K562 (cell line): ENCODE measurements at regions of chr7 and their contacts with region 1.

Region 1: GRCh38 chr7:101856473-101857357 is 39.3 kb downstream of the CUX1 start:
- DNase-seq: peak; percentile 97 to 98 (median 97)
- ATAC-seq: peak; percentile 94
- H3K4me3 ChIP-seq: peak overlapping the region; percentile 34
- H3K27ac ChIP-seq: peak overlapping the region; percentile 98
- H3K4me1 ChIP-seq: peaks cover 47 to 57% of the 10 kb centered on the region in 2 experiments
- H3K27me3 ChIP-seq: no peaks in the 10 kb centered on the region; a peak in 1 of 5 replicates
- CTCF ChIP-seq: peak; percentile 79 to 84 (median 82)
- EP300 ChIP-seq: peak; percentile 68
- POLR2A ChIP-seq: peak; percentile 69
- RAD21 ChIP-seq: peak; percentile 77 to 84

Region 2: DNA sequence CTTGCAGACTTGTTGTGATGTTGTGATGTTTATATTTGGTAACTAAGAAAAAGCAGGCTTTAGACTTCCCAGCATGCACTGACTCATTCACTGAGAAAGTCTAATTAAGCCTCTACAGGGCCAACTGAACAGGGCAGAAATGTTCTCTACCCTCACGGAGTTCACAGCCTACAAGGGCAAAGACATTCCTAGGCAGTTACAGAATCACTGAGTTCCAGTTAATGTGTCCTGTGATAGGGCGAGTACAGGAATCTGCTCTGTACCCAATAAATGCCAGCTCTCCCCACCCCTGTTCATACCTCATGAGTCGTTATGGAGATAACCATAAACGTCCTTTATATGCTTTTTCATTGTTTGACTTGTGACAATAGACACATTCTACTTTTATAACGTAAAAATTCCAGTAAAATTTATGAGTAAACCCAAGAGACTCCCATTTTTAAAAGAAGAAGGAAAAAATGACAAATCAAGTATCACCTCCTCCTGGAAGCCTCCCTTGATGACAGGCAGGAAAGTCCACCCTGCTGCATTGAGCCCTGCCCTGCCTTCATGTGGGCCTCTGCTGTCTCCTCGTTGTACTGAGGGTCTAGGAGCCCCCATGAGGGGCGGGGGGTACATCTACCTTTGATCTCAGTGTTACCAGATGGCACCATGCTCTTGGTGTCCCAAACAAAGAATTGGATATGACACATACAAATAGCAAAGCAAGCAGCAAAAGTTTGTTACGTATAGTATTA is 873.1 kb before region 1 on chr7:
- CTCF ChIA-PET with region 1: no interaction called
- POLR2A ChIA-PET with region 1: no interaction called
- in situ Hi-C with region 1: no loop called
- intact Hi-C with region 1: no loop called
- DNase-seq: no peak
- ATAC-seq: no peak
- H3K4me3 ChIP-seq: no peak overlapping the region
- H3K27ac ChIP-seq: no peak overlapping the region
- H3K4me1 ChIP-seq: peaks cover 0 to 2% of the 10 kb centered on the region in 2 experiments; a peak in 1 of 5 replicates
- H3K27me3 ChIP-seq: peaks cover 13 to 38% of the 10 kb centered on the region in 2 experiments
- CTCF ChIP-seq: no peak
- EP300 ChIP-seq: no peak
- POLR2A ChIP-seq: no peak
- RAD21 ChIP-seq: no peak

Region 3: DNA sequence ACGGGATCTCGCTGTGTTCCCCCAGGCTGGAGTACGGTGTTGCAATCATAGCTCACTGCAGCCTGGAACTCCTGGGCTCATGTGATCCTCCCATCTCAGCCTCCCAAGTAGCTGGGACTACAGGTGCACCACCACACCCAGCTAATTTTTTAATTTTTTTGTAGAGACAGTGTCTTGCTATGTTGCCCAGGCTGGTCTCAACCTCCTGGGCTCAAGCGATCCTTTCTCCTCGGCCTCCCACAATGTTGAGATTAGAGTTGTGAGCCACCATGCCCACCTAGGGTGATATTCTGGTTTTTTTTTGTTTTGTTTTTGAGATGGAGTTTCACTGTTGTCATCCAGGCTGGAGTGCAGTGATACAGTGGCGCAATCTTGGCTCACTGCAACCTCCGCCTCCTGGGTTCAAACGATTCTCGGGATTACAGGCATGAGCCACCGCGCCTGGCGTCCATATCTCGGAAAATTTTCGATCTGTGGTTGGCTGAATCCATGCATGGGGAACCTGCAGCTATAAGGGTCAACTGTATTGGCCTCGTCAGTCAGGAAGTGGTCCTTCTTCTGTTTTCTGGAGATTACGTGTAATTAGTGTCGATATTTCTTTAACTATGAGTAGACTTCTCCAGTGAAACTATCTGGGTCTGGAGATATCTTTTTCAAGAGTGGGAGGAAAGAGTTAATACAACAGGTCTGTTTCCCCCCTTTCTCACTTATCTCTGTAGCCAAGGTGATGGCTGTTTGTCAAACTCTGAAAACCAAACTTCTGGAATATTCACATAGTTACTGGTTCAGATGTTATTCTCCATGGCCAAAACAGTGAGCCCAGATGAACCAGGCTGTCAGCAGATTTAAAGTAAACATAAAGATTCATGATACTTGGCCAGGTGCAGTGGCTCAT is 590.8 kb before region 1 on chr7:
- CTCF ChIA-PET with region 1: no interaction called
- POLR2A ChIA-PET with region 1: no interaction called
- in situ Hi-C with region 1: no loop called
- intact Hi-C with region 1: no loop called
- DNase-seq: peak; percentile 55 to 84 (median 68)
- ATAC-seq: peak; percentile 84
- H3K4me3 ChIP-seq: no peak overlapping the region
- H3K27ac ChIP-seq: no peak overlapping the region
- H3K4me1 ChIP-seq: peaks cover 5 to 11% of the 10 kb centered on the region in 2 experiments; a peak in 4 of 5 replicates
- H3K27me3 ChIP-seq: peaks cover 2 to 13% of the 10 kb centered on the region in 2 experiments; a peak in 2 of 5 replicates
- CTCF ChIP-seq: no peak
- EP300 ChIP-seq: peak; percentile 77; the same call in 1 of the 2 replicates
- POLR2A ChIP-seq: peak; percentile 55
- RAD21 ChIP-seq: no peak

Region 4: DNA sequence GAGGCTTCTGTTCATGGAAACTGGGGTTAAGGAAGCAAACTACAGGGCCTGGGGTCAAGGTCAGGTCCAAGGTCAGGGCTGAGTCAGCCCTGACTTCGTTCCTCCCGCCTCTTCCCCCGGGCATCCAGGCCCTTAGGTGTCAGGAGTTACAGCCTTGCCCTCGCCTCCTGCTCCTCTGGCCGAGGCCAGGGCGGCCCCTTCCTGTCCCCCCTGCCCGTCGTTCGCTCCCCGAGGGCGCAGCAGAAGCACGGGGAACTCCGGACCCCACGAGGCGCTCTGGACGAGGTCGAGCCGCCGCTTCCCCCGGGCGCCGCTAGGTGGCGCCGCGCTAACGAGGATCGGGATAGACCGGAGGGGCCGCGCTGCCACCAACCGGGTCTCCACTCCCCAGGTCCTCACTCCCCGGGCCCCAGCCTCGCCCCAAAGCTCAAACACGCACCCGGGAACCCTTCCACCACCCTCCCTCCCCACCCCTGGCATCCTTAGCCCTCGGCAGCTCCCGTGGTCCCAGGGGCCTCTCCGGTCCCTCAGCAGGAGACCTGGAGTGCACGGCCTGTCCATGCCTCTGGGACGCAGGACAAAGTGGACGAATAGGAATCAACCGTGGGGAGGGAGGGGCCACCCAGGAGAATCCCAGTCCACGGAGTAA is 168.4 kb before region 1 on chr7:
- CTCF ChIA-PET with region 1: interaction called, 3 read pairs
- POLR2A ChIA-PET with region 1: no interaction called
- in situ Hi-C with region 1: no loop called
- intact Hi-C with region 1: loop called (anchors 2 kb)
- DNase-seq: peak; percentile 87 to 95 (median 92)
- ATAC-seq: peak; percentile 96
- H3K4me3 ChIP-seq: peak overlapping the region; percentile 36
- H3K27ac ChIP-seq: peak overlapping the region; percentile 76; the same call in 2 of the 3 replicates
- H3K4me1 ChIP-seq: peaks cover 5 to 12% of the 10 kb centered on the region in 2 experiments; a peak in 3 of 5 replicates
- H3K27me3 ChIP-seq: peaks cover 0 to 8% of the 10 kb centered on the region in 2 experiments; a peak in 1 of 5 replicates
- CTCF ChIP-seq: peak; percentile 86 to 95 (median 93)
- EP300 ChIP-seq: no peak
- POLR2A ChIP-seq: no peak
- RAD21 ChIP-seq: peak; percentile 95 to 97

Region 5: GRCh38 chr7:101708223-101708622 is 148.5 kb before region 1 on chr7:
- CTCF ChIA-PET with region 1: no interaction called
- POLR2A ChIA-PET with region 1: no interaction called
- in situ Hi-C with region 1: no loop called
- intact Hi-C with region 1: no loop called
- DNase-seq: no peak
- ATAC-seq: no peak
- H3K4me3 ChIP-seq: no peak overlapping the region
- H3K27ac ChIP-seq: no peak overlapping the region
- H3K4me1 ChIP-seq: no peaks in the 10 kb centered on the region; a peak in 1 of 5 replicates
- H3K27me3 ChIP-seq: peaks cover 32 to 50% of the 10 kb centered on the region in 2 experiments
- CTCF ChIP-seq: no peak
- EP300 ChIP-seq: no peak
- POLR2A ChIP-seq: no peak
- RAD21 ChIP-seq: no peak

Region 6: DNA sequence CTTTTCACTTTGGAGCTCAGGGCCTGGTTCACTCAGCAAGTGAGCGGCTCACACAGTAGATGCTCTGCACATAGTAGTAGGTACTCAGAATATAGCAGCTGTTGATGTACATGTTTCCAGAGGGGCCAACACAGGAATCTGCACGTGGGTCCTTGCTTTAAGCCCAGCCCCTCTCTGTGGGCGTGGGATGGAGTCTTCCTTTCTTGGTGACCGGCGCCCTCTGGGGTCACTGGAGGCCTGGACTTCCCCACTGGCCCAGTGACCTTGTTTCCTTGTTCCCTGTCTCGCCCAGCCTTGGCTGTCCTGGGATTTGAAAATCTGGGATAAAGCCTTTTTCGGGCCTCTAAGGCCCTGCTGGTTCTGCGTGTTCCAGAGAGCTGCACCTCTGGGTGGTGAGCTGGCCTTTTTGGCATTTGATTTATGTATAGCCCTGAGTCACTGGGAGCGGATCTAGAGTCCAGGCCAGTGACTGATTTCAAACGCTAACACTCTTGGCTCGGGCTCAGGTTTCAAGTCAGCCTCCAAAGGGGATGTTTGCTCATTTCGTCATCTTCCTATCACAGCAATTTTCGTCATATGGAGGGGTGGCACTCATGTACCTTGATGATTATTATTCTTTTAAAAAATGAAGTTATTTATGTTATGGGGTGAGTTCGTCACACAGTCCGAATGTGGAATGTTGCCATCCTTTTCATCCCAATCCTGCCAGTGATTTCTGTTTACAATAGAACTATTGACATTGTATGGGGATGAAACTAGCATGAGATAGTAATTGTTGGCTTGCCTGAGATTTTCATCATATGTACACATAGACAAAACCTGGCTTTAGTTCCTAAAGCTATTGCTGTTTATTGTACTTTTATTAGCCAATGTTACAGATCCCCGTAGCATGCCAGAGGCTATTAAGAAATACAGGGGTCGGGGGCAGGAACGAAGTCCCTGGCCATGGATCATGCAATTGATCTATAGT is 26.2 kb after region 1 on chr7:
- CTCF ChIA-PET with region 1: no interaction called
- POLR2A ChIA-PET with region 1: interaction called, 5 read pairs
- in situ Hi-C with region 1: no loop called
- intact Hi-C with region 1: loop called (anchors 2 kb)
- DNase-seq: peak; percentile 75 to 96 (median 84)
- ATAC-seq: peak; percentile 98
- H3K4me3 ChIP-seq: no peak overlapping the region
- H3K27ac ChIP-seq: peak overlapping the region; percentile 79
- H3K4me1 ChIP-seq: peaks cover 32 to 34% of the 10 kb centered on the region in 2 experiments
- H3K27me3 ChIP-seq: no peaks in the 10 kb centered on the region
- CTCF ChIP-seq: peak in 2 of 3 experiments; percentile 19 to 34; a peak in 1 of 6 replicates
- EP300 ChIP-seq: peak; percentile 80
- POLR2A ChIP-seq: 0 out of 2 replicates have a peak, but pooled peaks have one; percentile 44
- RAD21 ChIP-seq: peak; percentile 11 to 47; a peak in 3 of 4 replicates

Region 7: DNA sequence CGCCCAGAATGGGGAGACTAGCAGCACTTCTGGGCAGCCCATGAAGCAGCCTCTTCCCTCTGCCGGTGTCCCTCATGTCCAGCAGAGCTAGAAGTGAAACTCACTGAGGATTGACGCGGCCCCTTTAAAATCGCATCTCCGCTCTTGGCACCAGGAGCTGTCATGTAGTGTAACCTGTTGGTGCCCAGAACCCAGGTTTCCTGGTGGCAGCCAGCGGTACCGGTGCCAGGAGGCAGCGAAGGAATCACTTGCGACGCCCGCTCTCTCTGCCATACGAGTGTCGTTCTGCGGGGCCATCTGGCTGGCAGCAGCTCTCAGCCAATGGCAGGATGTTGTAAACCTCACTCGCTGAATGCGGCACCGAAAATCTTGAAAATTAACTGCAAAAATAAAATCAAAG is 43.4 kb after region 1 on chr7:
- CTCF ChIA-PET with region 1: no interaction called
- POLR2A ChIA-PET with region 1: interaction called, 3 read pairs
- in situ Hi-C with region 1: no loop called
- intact Hi-C with region 1: loop called (anchors 2 kb)
- DNase-seq: no peak
- ATAC-seq: no peak
- H3K4me3 ChIP-seq: no peak overlapping the region
- H3K27ac ChIP-seq: no peak overlapping the region
- H3K4me1 ChIP-seq: peaks cover 37 to 43% of the 10 kb centered on the region in 2 experiments
- H3K27me3 ChIP-seq: no peaks in the 10 kb centered on the region
- CTCF ChIP-seq: no peak
- EP300 ChIP-seq: no peak
- POLR2A ChIP-seq: no peak
- RAD21 ChIP-seq: no peak

Region 8: DNA sequence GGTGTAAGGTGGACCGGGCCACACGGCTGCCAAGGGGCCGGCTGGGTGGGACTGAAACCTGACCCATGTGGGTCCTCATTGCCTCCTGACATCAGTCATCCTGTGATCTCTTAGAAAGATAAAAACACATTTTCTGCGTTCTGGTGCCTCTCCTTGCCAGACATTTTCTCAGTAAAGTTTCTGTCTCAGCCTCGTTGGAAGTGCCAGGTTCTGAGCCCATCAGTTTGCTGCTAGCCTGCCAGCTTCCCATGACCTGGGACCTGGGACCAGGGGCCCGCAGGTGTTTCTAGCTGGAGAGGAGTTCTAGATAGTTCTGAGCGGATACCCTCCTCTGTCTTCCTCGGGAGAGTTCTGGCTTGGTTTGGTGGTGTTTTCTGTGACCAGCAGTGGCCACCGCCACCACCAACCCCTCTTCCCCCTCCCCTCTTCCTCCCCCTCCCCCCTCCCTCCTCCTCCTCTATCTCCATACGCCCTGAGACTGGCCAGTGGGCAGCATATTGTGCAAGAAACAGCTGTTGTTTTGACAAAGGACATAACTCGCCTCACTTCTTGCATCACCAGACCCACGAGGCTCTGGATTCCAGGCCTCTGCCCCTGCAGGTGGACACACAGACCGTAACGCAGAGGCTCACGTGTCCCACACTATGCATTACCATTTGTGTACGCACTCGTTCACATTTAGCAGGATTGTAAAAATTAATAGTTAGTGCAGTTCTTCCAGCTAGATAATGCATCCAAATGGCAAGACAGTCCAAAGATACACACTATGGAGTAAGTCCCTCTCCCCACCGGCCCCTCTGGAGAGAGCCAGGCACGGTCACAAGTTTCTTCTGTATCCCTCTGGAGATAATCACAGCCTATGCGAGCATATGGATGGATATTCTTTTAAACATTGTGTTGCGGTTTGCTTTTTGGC is 55.3 kb after region 1 on chr7:
- CTCF ChIA-PET with region 1: no interaction called
- POLR2A ChIA-PET with region 1: no interaction called
- in situ Hi-C with region 1: no loop called
- intact Hi-C with region 1: loop called (anchors 2 kb)
- DNase-seq: peak; percentile 53 to 70 (median 60)
- ATAC-seq: peak; percentile 75
- H3K4me3 ChIP-seq: no peak overlapping the region
- H3K27ac ChIP-seq: peak overlapping the region; percentile 70; the same call in 2 of the 3 replicates
- H3K4me1 ChIP-seq: peaks cover 31 to 42% of the 10 kb centered on the region in 2 experiments
- H3K27me3 ChIP-seq: no peaks in the 10 kb centered on the region
- CTCF ChIP-seq: no peak
- EP300 ChIP-seq: peak; percentile 53
- POLR2A ChIP-seq: no peak
- RAD21 ChIP-seq: 0 out of 4 replicates have a peak, but pooled peaks have one; percentile 10 to 14

Region 9: DNA sequence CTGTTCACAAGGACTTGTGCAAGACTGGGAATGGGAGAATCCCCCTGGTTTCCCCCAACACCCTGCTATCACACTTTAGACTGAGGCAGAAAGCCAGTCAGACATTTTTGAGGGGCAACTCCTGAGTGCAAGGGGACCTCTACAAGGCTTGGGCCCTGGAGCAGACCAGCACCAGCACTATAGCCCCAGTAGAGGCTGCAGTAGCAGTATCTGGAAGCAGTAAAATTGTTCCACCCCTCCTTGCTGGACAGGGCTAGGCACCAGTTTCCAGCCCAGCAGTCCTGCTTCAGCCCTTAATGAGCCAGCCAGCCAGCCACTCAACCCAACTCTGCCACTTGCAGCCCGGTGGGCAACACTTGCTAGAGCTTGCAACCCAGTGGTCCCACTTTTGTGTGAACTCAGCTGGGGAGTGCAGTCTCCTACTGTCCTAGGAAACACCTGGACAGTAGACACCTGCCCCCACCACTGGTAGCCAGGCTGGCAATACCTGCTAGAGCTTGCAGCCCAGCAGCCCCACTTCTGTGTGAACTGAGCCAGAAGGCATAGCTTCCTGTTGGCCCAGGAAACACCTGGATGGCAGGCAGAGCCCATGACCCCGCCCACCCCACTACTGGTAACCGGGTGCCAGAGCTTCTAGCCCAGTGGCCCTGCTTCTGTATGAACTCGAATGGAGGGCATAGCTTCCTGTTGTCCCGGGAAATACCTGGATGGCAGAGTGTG is 1152.9 kb after region 1 on chr7:
- CTCF ChIA-PET with region 1: no interaction called
- POLR2A ChIA-PET with region 1: no interaction called
- in situ Hi-C with region 1: no loop called
- intact Hi-C with region 1: no loop called
- DNase-seq: no peak
- ATAC-seq: peak; percentile 64
- H3K4me3 ChIP-seq: no peak overlapping the region
- H3K27ac ChIP-seq: no peak overlapping the region
- H3K4me1 ChIP-seq: no peaks in the 10 kb centered on the region
- H3K27me3 ChIP-seq: no peaks in the 10 kb centered on the region
- CTCF ChIP-seq: no peak
- EP300 ChIP-seq: no peak
- POLR2A ChIP-seq: no peak
- RAD21 ChIP-seq: no peak